Stomach (tissue), 19 donors: ENCODE measurements at regions of chr19 and their contacts with region 1.

Region 1: DNA sequence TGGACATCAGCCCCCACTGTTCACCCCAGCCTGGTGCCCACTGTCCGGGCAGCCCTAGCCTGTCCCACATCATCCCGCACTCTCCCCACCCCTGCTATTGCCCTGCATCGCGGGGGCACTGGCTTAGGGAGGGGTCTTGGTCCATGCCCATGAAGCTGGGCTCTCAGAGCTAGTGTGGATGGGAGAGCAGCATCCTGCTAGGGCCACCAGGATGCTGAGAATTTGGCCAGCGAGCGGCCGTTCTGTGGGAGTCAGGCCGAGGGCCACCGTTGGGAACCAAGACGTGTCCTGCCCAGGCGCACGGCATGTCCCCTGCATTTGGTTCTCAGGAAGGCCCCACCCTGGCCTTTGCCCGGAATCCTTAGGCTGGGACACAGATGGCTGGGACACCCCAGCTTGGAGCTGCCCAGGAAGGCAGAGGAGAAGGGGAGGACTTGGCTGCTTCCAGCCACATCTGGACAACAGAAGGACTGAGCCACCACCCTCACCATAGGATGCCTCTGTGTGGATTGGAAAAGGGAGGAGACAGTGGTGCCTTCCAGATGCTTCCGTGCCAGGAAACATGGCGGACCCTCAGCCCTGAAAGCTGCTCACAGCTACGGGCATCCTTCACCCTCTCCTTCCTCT is 14.6 kb downstream of the ADGRE5 start:
- DNase-seq: no peak
- H3K4me3 ChIP-seq: no peak overlapping the region
- H3K27ac ChIP-seq: no peak overlapping the region
- H3K4me1 ChIP-seq: no peaks in the 10 kb centered on the region
- H3K27me3 ChIP-seq: no peaks in the 10 kb centered on the region
- CTCF ChIP-seq: no peak
- EP300 ChIP-seq: no peak
- POLR2A ChIP-seq: no peak

Region 2: DNA sequence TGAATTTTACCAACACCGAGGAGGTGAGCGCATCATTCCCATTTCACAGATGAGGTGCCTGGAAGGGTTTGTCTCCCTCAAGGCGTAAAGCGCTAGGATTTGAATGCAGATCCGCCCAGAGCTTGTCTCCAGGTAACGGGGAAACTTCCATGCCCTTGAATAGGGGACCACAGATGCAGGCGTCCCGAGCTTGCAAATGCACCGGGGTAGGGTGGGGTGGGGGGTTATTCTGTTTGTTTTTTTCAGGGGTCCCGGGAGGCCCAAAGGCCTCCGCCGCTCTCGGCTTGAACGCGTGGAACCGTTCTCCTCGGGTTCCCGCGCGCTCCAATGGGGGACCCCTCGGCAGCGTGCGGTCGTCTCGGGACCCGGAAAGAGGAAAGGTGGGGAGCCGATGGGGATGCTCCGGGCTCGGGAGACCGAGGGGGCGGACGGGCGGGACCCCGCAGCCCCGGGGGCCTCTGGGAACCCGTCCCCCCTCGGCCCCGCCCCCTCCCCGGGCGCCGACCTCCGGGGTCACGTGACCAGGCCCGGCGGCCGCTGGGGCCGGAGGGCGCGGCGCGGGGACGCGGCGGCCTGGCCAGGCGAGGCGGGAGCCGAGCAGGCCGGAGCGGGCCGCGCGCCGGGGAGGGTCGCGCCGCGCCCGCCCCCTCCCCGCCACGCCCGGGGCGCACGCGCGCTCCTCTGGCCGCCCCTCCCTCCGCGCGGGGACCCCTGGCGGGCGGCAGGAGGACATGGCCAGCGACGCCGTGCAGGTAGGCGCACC is 37.1 kb after region 1 on chr19 and contains the start of gene PKN1:
- intact Hi-C with region 1: no loop called
- DNase-seq: peak; percentile 57 to 88
- H3K4me3 ChIP-seq: peak within 1 kb of the TSS; percentile 81 to 94 (median 88)
- H3K27ac ChIP-seq: peak within 1 kb of the TSS; percentile 20 to 92 (median 86)
- H3K4me1 ChIP-seq: peaks cover 30 to 50% (median 40%) of the 10 kb centered on the region in 4 donors
- H3K27me3 ChIP-seq: no peaks in the 10 kb centered on the region
- CTCF ChIP-seq: no peak
- EP300 ChIP-seq: no peak
- POLR2A ChIP-seq: no peak
- total RNA-seq, gene PKN1: 44.2 to 268 (median 90.4) TPM

Region 3: DNA sequence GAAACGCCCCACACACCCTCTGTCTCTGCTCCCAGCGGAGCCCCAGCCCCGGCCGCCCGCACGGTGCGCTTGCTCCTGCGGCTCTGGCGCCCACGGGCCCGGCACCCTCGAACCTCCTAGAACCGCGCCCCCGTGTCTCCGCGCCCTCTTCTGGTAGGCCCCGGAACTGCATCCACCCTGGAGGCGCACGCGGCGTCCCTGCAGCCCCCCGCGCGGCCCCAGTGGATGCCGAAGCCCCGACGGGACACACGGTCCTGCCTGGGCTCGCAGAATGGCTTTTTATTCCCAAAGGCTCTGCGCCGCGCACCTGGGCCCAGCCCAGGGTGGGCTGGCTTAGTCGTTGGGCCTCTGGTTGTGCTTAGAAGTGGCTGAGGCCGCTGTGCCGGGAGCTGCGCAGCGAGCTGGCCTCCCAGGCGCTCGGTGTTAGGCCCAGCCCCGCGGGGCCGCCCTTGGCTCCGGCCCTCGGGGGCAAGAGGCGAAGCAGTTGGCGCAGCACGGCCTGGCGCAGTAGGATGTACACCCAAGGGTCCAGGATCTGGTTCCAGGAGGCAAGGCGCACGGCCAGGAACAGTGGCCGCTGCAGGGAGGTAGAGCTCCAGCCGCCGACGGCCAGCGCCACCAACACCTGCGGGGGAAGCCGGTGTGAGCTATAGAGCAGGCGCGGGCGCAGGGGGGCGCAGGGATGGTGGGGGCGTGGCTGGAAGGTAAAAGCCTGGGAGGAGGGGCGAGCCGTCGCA is 76.5 kb after region 1 on chr19:
- intact Hi-C with region 1: no loop called
- DNase-seq: peak; percentile 70 to 89
- H3K4me3 ChIP-seq: peak overlapping the region; percentile 21 to 46 (median 30)
- H3K27ac ChIP-seq: peak overlapping the region in 3 of 5 donors; percentile 23 to 54 (median 34)
- H3K4me1 ChIP-seq: peaks cover 55 to 60% (median 58%) of the 10 kb centered on the region in 4 donors
- H3K27me3 ChIP-seq: peaks cover 0 to 47% (median 29%) of the 10 kb centered on the region in 3 donors
- CTCF ChIP-seq: peak in 6 of 7 experiments; percentile 54 to 99 (median 96)
- EP300 ChIP-seq: no peak
- POLR2A ChIP-seq: no peak

Region 4: DNA sequence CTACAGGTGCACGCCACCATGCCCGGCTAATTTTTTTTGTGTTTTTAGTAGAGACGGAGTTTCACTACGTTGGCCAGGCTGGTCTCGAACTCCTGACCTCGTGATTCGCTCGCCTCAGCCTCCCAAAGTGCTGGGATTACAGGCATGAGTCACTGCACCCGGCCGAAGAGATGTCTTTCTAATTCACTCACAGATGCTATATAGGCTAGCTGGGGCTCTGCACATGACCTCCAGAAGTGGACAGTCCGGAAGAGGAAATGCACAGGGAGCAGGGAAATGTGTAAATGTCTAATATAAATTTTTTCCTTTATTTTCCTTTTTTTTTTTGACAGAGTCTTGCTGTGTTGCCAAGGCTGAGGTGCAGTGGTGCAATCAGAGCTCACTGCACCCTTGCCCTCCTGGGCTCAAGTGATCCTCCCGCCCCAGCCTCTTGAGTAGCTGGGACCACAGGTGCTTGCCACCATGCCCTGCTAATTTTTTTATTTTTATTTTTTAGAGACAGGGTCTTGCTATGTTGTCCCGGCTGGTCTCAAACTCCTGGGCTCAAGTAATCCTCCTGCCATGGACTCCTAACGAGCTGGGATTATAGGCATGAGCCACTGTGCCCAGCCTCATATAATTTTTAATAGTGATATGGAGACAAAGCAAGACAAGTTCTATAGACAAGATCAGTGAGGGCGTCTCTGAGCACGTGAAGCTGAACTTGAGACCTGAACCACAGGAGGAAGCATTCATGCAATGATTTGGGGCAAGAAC is 91.7 kb after region 1 on chr19:
- intact Hi-C with region 1: no loop called
- DNase-seq: no peak
- H3K4me3 ChIP-seq: no peak overlapping the region
- H3K27ac ChIP-seq: no peak overlapping the region
- H3K4me1 ChIP-seq: no peaks in the 10 kb centered on the region
- H3K27me3 ChIP-seq: no peaks in the 10 kb centered on the region
- CTCF ChIP-seq: no peak
- EP300 ChIP-seq: no peak
- POLR2A ChIP-seq: no peak

Region 5: DNA sequence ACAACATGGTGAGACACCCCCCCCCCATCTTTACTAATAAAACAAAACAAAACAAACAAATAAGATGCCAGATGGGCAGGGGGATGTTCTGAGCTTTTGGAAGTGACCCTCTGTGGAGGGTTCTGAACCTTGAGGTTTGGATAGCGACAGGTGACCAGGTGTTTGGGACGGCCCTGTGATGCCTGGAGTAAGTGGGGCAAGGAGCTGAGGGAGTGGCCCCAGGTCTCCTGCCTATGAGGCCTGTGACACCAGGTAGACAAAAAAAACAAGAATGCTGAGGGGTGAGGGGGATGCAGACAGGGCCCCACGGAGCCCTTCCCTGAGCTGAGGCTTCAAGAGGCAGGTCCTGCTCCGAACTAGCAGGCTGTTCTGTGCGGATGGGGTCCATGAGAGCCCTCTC is 373.4 kb after region 1 on chr19:
- intact Hi-C with region 1: loop called (anchors 5 kb)
- DNase-seq: no peak
- H3K4me3 ChIP-seq: no peak overlapping the region
- H3K27ac ChIP-seq: no peak overlapping the region
- H3K4me1 ChIP-seq: no peaks in the 10 kb centered on the region
- H3K27me3 ChIP-seq: peaks cover 0 to 9% (median 0%) of the 10 kb centered on the region in 3 donors
- CTCF ChIP-seq: no peak
- EP300 ChIP-seq: no peak
- POLR2A ChIP-seq: no peak